Transverse colon (tissue), 4 donors: ENCODE measurements at regions of chr2 and their contacts with region 1.

Region 1: DNA sequence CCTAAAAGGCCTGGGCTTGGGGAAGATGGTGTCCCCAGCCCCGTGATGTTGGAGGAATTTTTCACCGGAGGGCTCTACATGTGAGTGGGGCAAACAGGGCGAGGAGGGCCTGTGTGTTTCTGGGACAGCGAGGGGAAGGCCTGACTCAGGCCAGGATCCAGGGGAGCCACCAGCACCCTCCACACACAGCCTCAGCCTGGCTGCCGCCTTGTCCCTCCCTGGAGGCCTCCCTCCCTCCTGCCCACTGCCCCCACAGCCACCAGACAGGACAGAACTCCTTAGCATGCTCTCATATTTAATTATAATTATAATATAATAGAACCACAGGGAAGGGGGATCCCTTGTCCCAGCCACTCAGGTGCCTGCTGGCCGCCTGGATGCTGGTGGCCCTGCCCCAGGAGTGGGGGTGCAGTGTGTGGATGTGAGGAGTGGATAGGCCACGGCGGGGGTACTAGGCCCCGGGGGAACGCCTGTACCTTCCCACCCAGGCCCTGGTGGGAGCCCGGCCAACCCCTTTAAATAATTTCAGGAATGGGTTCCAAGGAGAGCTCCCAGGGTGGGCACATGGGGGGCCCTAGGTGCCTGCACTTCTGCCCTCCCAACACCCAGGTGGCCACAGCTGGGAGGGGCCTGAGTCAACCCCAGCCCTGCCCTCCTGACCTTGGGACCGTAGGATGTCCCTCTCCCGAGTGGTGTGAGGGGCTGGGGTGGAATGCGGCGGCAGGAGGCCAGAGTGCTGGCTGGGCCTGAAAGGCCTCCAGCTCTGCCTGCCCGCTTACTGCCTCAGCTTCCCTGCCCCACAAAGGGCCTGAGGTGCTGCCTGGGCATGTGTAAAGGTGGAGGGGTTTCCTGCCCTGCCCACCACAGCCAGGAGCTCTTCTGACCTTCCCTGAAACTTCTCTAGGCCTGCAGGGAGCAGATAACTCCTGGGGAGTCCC is 8.8 kb downstream of the PDCD1 start:
- DNase-seq: no peak
- H3K4me3 ChIP-seq: no peak overlapping the region
- H3K27ac ChIP-seq: no peak overlapping the region
- H3K4me1 ChIP-seq: peaks cover 0 to 5% (median 2%) of the 10 kb centered on the region in 4 donors
- H3K27me3 ChIP-seq: no peaks in the 10 kb centered on the region
- CTCF ChIP-seq: no peak
- EP300 ChIP-seq: no peak
- POLR2A ChIP-seq: no peak

Region 2: DNA sequence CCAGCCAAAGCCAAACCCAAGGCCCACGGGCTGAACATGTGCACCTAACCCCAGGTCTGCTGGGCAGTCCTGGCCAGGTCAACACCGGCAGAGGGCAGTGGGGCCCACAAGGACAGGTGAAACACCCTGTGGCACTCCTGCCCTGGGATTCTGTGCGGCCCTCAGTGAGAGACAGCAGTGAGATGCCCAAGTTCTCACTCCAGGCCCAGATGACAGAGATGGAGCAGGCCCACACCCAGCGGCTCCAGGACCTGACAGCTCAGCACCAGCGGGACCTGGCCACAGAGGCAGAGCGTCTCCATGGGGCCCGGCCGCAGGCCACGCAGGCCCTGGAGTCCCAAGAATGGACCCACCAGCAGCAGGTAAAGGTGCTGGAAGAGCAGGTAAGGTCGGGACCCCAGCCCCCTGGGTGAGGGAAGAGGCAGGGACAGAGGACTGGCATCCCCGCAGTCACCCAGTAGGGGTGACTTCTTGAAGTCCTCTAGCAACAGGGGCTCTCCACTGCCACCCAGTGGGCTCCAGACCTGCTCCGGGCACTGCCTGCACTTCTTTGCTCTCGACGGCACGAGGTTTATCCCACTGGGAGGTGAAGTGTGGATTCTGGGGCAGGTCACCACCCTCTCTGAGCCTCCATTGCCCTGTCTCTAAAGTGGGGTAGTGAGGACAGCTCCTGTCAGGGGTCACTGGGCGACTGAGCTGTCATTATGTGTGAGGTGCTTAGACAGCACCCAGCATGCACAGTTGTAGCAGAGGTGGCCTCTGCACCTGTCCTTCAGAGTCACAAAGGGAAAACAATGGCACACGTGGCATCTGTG is 860.2 kb before region 1 on chr2:
- in situ Hi-C with region 1: no loop called
- intact Hi-C with region 1: loop called (anchors 5 kb)
- DNase-seq: peak; percentile 39
- H3K4me3 ChIP-seq: no peak overlapping the region
- H3K27ac ChIP-seq: no peak overlapping the region
- H3K4me1 ChIP-seq: peaks cover 9 to 39% (median 16%) of the 10 kb centered on the region in 4 donors
- H3K27me3 ChIP-seq: no peaks in the 10 kb centered on the region
- CTCF ChIP-seq: peak in 4 of 5 experiments; percentile 23 to 40 (median 36)
- EP300 ChIP-seq: no peak
- POLR2A ChIP-seq: no peak

Region 3: DNA sequence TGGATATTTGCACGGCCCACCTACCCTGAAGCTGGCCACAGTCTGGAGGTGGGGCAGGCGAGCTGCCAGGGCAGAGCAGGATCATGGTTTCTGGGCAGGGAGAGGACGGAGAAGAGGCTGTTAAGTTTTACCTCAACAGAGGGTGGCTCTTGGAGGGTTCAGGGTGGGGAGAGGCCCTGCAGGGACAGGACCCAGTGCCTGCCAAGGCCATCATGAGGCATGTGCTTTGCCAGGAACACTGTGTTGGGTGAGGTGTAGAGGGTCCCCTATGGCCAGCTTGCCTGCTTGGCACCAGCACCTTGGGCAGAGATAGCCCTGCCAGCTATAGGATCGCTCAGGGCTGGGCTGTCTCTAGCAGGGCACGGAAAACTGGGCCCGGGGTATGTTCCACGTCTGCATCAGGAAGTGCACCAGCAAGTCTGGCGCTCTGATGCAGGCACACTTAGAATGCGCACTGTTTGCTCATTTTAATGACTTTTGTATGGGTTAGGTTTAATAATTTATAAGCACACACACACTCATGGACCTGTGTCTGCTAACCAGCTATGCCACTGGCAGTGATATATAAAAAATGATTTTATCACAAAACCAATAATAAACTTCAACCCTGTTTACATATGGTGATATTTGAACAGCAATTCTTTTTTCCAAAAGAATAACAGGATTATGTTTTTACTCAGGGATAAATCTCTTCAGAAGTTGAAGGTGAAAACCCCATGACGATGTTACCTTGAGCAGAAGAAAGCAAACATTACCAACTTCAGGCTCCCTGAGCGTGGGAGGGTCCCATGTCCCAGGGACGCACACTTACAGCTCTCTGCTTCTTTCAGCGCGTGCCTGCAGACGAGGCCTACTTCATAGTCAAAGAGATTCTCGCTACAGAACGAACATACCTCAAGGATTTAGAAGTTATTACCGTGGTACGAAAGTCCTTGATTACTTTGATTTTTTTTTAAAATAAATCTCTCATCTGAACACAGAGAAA is 387.9 kb before region 1 on chr2:
- in situ Hi-C with region 1: no loop called
- intact Hi-C with region 1: no loop called
- DNase-seq: peak; percentile 21
- H3K4me3 ChIP-seq: no peak overlapping the region
- H3K27ac ChIP-seq: peak overlapping the region in 1 of 4 donors; percentile 28
- H3K4me1 ChIP-seq: peaks cover 0 to 8% (median 3%) of the 10 kb centered on the region in 4 donors
- H3K27me3 ChIP-seq: no peaks in the 10 kb centered on the region
- CTCF ChIP-seq: no peak
- EP300 ChIP-seq: no peak
- POLR2A ChIP-seq: no peak

Region 4: DNA sequence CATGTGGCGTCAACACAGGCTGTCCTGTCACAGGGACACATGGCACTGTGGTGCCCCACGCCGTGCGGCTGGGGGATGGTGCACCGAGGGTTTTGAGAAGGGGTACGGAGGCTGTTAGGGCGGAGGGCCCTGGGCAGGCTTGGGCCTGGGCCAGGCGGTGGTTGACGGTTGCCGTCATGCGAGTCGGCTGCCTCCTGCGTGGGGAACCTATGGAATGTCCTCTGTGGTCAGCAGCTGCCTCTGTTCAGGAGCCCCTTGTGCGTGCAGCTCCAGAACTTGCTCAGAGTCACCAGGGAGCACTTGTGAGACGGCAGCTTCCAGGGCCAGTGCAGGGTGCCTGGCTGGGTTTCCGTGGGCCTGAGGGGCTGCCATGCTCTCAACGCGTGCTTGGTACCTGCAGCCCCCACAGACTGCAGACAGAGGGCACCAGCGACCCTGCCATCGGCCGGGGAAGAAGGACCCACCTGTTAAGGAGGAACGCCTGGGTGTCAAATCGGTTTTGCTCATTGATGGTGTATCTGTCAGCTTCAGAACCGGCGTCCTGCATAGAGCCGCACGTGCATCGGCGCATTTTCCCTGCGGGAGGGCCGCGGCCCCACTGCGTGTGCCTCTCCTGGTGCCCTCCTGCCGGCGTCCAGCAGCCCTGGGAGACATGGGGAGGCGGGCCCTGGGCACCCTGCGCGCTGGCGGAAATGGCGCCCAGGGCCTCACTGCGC is 125.5 kb before region 1 on chr2:
- in situ Hi-C with region 1: no loop called
- intact Hi-C with region 1: no loop called
- DNase-seq: no peak
- H3K4me3 ChIP-seq: no peak overlapping the region
- H3K27ac ChIP-seq: no peak overlapping the region
- H3K4me1 ChIP-seq: no peaks in the 10 kb centered on the region
- H3K27me3 ChIP-seq: no peaks in the 10 kb centered on the region
- CTCF ChIP-seq: peak in 1 of 5 experiments; percentile 13
- EP300 ChIP-seq: no peak
- POLR2A ChIP-seq: no peak

Region 5: DNA sequence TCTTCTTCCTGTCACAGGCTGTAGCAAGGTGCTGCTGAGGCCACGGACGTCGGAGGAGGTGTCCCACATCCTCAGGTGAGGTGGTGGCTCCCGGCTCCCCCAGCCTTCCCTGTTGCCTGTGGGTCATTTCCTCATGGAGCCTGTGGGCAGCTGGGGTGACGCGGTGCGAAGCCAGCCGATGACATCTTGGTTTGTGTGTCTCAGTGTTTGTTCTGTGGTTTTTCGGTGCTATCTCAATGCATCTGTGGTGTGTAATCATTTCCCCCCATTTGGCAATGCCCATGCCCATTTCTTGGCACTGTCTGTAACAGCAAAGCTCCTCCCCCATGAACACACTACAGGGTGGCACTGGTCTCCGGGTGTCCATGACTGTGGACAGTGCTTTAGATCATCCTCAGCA is 108.9 kb before region 1 on chr2:
- in situ Hi-C with region 1: no loop called
- intact Hi-C with region 1: no loop called
- DNase-seq: no peak
- H3K4me3 ChIP-seq: no peak overlapping the region
- H3K27ac ChIP-seq: no peak overlapping the region
- H3K4me1 ChIP-seq: peaks cover 0 to 3% (median 1%) of the 10 kb centered on the region in 4 donors
- H3K27me3 ChIP-seq: no peaks in the 10 kb centered on the region
- CTCF ChIP-seq: no peak
- EP300 ChIP-seq: no peak
- POLR2A ChIP-seq: no peak

Region 6: DNA sequence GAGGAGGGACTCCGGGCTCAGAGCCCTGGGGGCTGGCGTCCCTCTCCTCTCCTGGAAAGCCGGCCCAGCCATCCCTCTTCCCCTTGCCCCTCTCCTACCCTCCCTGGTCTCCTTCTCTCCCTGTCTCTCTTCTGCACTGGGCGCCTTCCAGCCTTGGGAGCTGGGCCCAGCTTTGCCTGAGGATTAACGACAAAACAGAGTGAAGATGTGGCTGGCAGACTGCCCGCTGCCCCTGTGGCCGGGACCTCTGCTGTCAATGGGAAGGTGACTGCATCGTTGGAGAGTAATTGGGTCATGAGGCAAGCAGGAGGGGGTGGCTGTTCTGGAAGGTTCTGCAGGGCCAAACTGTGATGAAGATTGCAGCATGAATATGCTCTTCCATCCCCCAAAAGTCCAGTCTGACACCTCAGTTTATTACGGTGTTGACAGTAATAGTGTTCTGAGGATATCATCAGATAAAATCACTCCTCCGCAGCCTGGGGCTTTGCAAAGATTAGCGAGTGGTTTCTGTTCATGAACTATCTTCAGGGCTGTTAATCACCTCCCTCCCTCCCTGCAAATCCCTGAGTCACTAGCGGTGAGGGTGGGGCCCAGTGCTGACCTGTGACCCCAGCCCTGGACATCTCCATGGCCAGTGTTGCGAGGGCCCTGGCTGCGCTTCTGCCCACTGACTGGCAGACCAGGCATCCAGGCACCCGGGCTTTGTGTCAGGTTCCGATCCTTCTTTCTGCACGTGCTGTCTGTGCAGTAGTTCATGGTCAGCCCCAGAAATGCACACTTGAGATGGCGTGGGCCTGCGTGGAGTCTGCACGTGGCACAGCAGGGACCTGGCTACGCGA is 42.6 kb after region 1 on chr2:
- in situ Hi-C with region 1: no loop called
- intact Hi-C with region 1: no loop called
- DNase-seq: no peak
- H3K4me3 ChIP-seq: no peak overlapping the region
- H3K27ac ChIP-seq: peak overlapping the region in 1 of 4 donors; percentile 43
- H3K4me1 ChIP-seq: peaks cover 0 to 2% (median 0%) of the 10 kb centered on the region in 4 donors
- H3K27me3 ChIP-seq: no peaks in the 10 kb centered on the region
- CTCF ChIP-seq: no peak
- EP300 ChIP-seq: no peak
- POLR2A ChIP-seq: no peak